OCI-LY7 (cell line): ENCODE measurements at regions of chr2 and their contacts with region 1.

Region 1: GRCh38 chr2:156803248-156803647 is 367.1 kb downstream of the GPD2 start:
- DNase-seq: no peak
- H3K4me3 ChIP-seq: no peak overlapping the region
- H3K27ac ChIP-seq: no peak overlapping the region
- H3K4me1 ChIP-seq: no peaks in the 10 kb centered on the region
- CTCF ChIP-seq: no peak

Region 2: DNA sequence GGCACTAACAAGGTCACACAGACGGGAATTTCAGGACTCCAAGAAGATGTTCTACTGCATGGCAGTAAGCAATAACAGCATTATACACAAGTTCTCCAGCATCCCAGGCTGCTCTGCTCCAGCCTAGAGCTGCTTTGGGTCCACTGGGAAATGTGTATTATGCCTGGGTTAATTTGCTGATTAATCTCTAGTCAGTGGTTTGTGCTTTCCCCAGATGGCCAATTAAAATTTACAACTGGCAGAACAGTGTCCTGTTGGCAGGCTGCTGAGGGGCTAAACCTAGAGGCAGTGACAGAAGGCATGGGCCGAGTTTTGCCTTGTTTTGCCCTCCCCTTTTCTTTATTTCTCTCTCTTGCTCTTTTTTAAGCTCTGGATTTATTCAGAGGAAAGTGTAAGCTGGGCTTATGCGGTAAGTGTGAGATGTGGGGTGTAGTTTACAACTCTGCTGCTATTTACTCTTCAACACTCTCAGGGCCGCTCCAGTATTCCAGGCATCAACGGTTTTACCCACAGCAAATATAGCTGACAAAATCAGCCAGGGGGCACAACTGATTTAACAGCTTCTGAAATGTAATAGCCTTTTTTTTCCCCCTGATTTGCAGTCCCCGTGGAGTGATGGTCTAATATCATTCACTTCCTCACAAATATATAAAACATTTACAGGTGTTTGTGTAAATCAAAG is 19.1 kb before region 1 on chr2:
- CTCF ChIA-PET with region 1: no interaction called
- POLR2A ChIA-PET with region 1: no interaction called
- intact Hi-C with region 1: loop called (anchors 1 kb)
- DNase-seq: no peak
- H3K4me3 ChIP-seq: no peak overlapping the region
- H3K27ac ChIP-seq: no peak overlapping the region
- H3K4me1 ChIP-seq: no peaks in the 10 kb centered on the region
- CTCF ChIP-seq: no peak